GM13977 (cell line): ENCODE measurements at regions of chr16 and their contacts with region 1.

Region 1: DNA sequence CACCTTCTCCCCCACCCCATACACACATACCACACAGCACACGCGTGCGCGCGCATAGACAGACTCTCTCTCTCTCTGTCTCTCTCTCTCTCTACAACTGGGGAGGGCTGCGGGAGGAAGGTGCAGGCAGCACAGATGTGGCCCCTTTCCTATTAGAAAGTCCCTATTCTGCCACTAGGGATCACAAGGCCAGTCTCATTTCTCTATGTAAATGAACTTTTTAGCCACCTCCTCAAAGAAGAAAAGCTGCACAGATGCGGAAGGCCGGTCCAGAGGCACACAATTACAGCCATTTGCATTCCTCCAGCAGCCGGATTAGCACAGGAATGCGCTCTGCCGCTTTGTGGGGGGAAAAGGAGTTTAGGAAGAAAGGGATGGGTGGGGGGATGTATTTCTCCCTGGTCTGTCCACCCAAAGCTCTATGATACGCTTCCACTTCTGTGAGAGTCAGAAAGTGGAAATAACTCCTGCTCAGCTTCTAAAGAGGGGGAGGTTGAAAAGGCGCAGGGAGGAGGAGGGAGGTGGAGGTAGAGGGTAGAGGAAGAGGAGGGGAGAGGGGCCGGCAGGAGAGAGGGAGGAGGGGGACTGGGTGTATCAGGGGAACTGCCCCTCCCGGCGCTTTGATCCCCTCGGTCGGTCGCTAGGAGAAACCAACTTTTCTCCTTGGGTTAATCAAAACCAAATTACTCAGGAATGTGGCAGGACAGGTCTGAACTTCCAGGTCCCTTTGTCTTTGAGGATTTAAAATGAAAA is 11.7 kb downstream of the ZFHX3 start:
- DNase-seq: peak; percentile 74
- CTCF ChIP-seq: no peak

Region 2: DNA sequence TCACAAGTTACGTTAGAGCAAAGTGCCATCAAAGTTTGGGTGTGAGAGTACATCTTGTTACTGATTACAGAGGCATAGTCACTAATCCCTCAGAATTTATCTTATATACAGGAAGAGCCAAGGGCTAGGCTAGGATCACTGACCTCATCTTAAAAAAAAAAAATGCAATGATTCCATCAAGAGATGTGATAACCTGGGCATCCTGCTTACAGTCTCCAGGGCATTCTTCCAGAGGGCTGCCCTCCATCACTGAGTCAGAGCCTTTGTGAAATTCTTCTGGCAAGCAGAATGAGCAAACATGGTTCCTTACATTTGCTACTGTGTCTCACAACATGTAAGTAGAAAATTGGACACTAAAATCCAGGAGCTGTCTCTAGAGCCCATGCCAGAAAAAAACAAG is 398.9 kb before region 1 on chr16:
- in situ Hi-C with region 1: no loop called
- DNase-seq: no peak
- CTCF ChIP-seq: no peak

Region 3: DNA sequence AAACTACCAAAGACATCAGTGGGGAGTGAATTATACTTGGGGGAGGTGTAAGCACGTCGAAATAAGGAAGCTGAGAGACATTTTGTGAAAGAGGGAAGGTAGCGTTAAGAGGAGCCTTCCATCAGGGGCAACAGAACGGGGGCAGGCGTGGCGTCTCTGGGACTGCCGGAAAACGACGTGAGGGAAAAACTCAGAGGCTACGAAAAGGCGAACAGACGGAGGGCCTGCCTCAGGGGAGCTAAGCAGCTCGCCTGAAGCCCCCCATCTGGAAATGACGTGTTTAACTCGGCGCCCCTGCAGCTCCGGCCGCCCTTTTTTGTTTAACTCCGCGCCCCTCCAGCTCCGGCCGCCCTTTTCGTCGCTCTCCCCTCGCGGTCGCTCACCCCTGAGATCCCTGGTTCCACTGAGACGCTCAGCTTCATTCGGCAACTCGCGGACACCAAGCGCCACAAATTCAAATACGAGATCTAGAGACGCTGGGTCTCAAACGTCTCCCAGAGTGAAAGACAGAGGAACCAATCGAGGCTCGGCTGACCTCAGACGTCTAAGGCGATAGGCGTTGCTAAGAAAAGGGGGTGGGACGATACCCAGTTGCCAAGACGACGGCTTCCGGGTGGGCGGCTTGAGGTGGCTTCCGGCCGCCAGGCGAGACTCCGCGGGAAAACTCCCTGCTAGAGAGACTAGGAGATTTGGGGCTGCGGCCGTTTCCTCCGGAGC is 371.6 kb before region 1 on chr16:
- in situ Hi-C with region 1: loop called (anchors 10 kb)
- DNase-seq: peak; percentile 93
- CTCF ChIP-seq: no peak